ENCODE measurements at regions of chr5 and their contacts with region 1.

Region 1: DNA sequence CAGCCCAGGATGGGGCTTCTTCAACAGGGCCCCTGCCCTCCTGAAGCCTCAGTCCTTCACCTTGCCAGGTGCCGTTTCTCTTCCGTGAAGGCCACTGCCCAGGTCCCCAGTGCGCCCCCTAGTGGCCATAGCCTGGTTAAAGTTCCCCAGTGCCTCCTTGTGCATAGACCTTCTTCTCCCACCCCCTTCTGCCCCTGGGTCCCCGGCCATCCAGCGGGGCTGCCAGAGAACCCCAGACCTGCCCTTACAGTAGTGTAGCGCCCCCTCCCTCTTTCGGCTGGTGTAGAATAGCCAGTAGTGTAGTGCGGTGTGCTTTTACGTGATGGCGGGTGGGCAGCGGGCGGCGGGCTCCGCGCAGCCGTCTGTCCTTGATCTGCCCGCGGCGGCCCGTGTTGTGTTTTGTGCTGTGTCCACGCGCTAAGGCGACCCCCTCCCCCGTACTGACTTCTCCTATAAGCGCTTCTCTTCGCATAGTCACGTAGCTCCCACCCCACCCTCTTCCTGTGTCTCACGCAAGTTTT is 23.6 kb downstream of the PCDHGC5 start:
- DNase-seq: peak; percentile 84
- H3K4me3 Mint-ChIP-seq: peak overlapping the region; percentile 66
- H3K27ac Mint-ChIP-seq: peak overlapping the region; percentile 59
- H3K4me1 Mint-ChIP-seq: peaks cover 30% of the 10 kb centered on the region
- H3K27me3 Mint-ChIP-seq: no peaks in the 10 kb centered on the region

Region 2: DNA sequence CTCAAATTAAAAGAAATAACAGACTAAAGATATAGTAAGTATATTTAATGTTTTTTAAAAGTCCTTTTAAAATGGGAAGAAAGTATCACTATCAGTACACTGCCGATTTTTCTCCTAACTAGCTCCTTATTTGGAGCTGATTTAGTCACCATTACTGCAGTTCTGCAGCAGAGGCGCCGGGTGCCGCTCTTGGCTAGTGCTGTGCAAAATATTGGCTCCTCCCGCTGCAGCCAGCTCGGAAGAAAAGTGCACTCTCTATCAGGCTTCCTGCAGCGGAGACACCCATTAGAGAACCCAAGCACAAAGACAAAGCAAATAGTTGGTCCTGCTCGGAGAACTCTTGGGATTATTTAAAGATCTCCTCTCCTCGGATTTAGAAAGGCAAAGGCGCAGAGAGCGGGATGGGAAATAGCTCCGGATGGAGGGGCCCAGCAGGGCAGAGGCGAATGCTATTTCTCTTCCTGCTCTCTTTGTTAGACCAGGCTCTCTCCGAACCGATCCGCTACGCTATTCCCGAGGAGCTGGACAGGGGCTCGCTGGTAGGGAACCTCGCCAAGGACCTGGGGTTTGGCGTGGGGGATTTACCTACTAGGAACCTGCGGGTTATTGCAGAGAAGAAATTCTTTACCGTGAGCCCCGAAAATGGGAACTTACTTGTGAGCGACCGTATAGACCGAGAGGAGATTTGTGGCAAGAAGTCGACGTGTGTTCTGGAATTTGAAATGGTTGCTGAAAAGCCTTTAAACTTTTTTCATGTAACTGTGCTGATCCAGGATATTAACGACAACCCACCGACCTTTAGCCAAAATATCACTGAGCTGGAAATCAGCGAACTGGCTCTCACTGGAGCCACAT is 142.2 kb before region 1 on chr5 and contains the start of gene PCDHGB3:
- CTCF ChIA-PET with region 1: interaction called, 11 read pairs
- POLR2A ChIA-PET with region 1: no interaction called
- DNase-seq: peak; percentile 33
- H3K4me3 Mint-ChIP-seq: peak within 1 kb of the TSS; percentile 46
- H3K27ac Mint-ChIP-seq: no peak within 1 kb of the TSS
- H3K4me1 Mint-ChIP-seq: no peaks in the 10 kb centered on the region
- H3K27me3 Mint-ChIP-seq: peaks cover 39% of the 10 kb centered on the region
- total RNA-seq, gene PCDHGB3: 0.10 to 0.25 TPM

Region 3: GRCh38 chr5:141412854-141413539 is 99.5 kb before region 1 on chr5 and contains the start of gene PCDHGA10:
- CTCF ChIA-PET with region 1: interaction called, 17 read pairs
- POLR2A ChIA-PET with region 1: no interaction called
- DNase-seq: peak; percentile 66
- H3K4me3 Mint-ChIP-seq: peak within 1 kb of the TSS; percentile 65
- H3K27ac Mint-ChIP-seq: peak within 1 kb of the TSS; percentile 34
- H3K4me1 Mint-ChIP-seq: peaks cover 21% of the 10 kb centered on the region
- H3K27me3 Mint-ChIP-seq: peaks cover 62% of the 10 kb centered on the region
- total RNA-seq, gene PCDHGA10: 0.05 TPM in 1 of 2 experiments, not detected in the other

Region 4: DNA sequence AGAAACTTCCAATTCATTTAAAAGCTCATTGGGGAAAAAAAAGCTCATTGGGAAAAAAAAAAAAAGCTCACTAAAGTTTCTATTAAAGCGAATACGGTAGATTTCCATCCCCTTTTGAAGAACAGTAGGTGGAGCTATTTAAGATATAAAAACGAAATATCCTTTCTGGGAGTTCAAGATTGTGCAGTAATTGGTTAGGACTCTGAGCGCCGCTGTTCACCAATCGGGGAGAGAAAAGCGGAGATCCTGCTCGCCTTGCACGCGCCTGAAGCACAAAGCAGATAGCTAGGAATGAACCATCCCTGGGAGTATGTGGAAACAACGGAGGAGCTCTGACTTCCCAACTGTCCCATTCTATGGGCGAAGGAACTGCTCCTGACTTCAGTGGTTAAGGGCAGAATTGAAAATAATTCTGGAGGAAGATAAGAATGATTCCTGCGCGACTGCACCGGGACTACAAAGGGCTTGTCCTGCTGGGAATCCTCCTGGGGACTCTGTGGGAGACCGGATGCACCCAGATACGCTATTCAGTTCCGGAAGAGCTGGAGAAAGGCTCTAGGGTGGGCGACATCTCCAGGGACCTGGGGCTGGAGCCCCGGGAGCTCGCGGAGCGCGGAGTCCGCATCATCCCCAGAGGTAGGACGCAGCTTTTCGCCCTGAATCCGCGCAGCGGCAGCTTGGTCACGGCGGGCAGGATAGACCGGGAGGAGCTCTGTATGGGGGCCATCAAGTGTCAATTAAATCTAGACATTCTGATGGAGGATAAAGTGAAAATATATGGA is 81.9 kb before region 1 on chr5 and contains the start of gene PCDHGA12:
- CTCF ChIA-PET with region 1: interaction called, 16 read pairs
- POLR2A ChIA-PET with region 1: no interaction called
- DNase-seq: no peak
- H3K4me3 Mint-ChIP-seq: peak within 1 kb of the TSS; percentile 53
- H3K27ac Mint-ChIP-seq: peak within 1 kb of the TSS; percentile 41
- H3K4me1 Mint-ChIP-seq: peaks cover 6% of the 10 kb centered on the region
- H3K27me3 Mint-ChIP-seq: peaks cover 42% of the 10 kb centered on the region
- total RNA-seq, gene PCDHGA12: not detected

Region 5: DNA sequence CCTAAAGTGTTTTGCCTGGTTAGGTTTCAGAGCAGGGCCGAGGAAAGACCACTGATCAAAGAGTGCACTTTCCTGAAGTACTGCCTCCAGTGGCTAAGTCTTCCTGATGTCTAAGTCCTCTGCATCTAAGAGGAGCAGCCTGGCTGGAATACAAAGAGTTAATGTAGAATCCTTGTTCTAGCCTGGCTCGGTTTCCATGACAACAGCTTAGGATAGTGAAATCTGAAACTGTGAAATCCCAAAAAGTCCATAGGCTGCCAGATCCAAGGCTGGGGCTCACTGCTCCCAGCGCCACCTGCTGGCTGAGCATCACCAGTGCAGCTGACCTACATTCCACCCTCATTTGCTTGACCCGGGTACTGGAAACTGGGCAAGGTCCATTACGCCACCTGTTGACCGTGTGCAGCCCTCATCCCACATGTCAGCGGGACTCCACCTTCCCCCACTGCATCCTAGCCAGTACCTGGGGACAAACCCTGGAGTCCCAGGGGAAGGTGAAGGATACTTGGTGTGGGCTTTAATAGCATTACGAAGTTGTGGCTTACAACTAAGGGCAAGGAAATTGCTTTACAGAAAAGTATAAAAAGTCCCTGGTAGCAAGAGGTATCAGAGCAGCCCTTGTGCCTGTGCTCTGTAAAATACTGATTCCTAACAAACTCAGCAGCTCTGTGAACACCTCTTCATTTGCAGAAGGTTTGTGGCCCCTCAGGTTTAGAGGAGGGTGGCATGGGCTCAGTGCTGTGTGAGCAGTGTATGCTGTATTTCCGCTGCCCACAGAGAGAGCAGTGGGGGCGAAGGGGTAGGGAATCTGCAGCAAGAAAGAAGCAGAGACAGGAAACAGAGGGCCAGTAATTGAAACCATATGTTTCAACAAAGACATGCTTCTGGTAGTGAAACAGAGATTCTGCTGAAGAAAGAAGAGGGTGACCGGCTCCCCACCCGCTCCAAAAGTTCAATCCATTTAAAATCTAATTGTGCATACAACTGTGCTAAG is 12.5 kb after region 1 on chr5:
- CTCF ChIA-PET with region 1: interaction called, 57 read pairs
- POLR2A ChIA-PET with region 1: interaction called, 6 read pairs
- DNase-seq: peak; percentile 51
- H3K4me3 Mint-ChIP-seq: no peak overlapping the region
- H3K27ac Mint-ChIP-seq: no peak overlapping the region
- H3K4me1 Mint-ChIP-seq: peaks cover 25% of the 10 kb centered on the region
- H3K27me3 Mint-ChIP-seq: no peaks in the 10 kb centered on the region

Region 6: DNA sequence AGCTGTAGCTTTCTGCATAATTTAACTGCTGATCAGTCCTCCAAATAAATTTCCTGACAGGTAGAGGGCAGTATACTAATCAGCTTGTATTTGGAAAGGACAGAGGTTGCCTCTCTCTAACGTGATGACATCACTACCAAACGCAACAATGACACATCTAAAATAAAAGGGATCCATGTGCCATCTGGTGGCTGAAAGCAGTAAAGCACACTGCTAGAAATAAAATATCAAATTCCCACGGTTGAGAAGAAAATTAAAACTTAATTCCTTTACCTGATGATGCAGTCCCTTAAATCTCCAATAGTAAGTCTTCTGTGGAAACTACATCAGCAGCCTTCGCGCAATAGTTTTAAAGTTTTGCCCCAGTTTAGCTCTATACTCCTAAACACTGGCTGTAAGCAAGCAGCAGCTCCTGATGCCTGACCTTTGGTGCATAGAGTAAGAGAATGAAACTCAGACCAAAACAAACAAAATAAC is 51.8 kb after region 1 on chr5:
- CTCF ChIA-PET with region 1: interaction called, 12 read pairs
- POLR2A ChIA-PET with region 1: no interaction called
- DNase-seq: peak; percentile 68
- H3K4me3 Mint-ChIP-seq: no peak overlapping the region
- H3K27ac Mint-ChIP-seq: peak overlapping the region; percentile 79
- H3K4me1 Mint-ChIP-seq: peaks cover 40% of the 10 kb centered on the region
- H3K27me3 Mint-ChIP-seq: no peaks in the 10 kb centered on the region